ENCODE measurements at regions of chr12 and their contacts with region 1.

Region 1: GRCh38 chr12:19186722-19187661 is 57.5 kb downstream of the PLEKHA5 start:
- DNase-seq: peak; percentile 71
- ATAC-seq: peak; percentile 46; the same call in 1 of the 2 replicates
- H3K4me3 ChIP-seq: no peak overlapping the region
- H3K27ac ChIP-seq: no peak overlapping the region
- H3K4me1 ChIP-seq: peaks cover 10% of the 10 kb centered on the region
- H3K27me3 ChIP-seq: no peaks in the 10 kb centered on the region
- CTCF ChIP-seq: peak; percentile 68
- POLR2A ChIP-seq: no peak
- RAD21 ChIP-seq: peak; percentile 73

Region 2: GRCh38 chr12:18250313-18250916 is 936.6 kb before region 1 on chr12:
- CTCF ChIA-PET with region 1: interaction called, 5 read pairs
- POLR2A ChIA-PET with region 1: no interaction called
- dilution Hi-C with region 1: no loop called
- in situ Hi-C with region 1: loop called (anchors 10 kb)
- intact Hi-C with region 1: loop called (anchors 1 kb)
- DNase-seq: peak; percentile 76
- ATAC-seq: peak; percentile 48; the same call in 1 of the 2 replicates
- H3K4me3 ChIP-seq: no peak overlapping the region
- H3K27ac ChIP-seq: no peak overlapping the region
- H3K4me1 ChIP-seq: no peaks in the 10 kb centered on the region
- H3K27me3 ChIP-seq: no peaks in the 10 kb centered on the region
- CTCF ChIP-seq: peak; percentile 78
- POLR2A ChIP-seq: no peak
- RAD21 ChIP-seq: peak; percentile 78

Region 3: DNA sequence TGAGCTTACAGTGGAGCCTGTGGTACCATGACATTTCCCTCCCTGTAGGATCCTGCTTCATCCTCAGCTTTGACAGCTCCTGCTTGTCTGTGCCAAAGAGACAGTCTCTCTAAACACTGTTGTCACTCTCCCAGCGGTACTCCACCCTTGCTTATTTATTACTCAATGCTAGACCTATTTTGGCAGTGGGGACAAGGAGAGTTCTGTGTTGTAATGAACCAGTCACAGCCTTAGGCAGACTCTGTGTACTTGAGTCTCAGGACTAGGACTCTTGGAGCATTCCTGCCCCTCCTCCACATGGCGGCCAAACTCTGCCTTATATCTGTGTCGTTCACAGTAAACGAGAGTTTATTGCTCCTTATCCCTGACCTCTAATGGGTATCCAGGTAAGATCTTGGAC is 854.8 kb before region 1 on chr12:
- CTCF ChIA-PET with region 1: no interaction called
- POLR2A ChIA-PET with region 1: no interaction called
- dilution Hi-C with region 1: no loop called
- in situ Hi-C with region 1: no loop called
- intact Hi-C with region 1: no loop called
- DNase-seq: no peak
- ATAC-seq: no peak; the same call in 1 of the 2 replicates
- H3K4me3 ChIP-seq: no peak overlapping the region
- H3K27ac ChIP-seq: no peak overlapping the region
- H3K4me1 ChIP-seq: no peaks in the 10 kb centered on the region
- H3K27me3 ChIP-seq: no peaks in the 10 kb centered on the region
- CTCF ChIP-seq: no peak
- POLR2A ChIP-seq: no peak
- RAD21 ChIP-seq: no peak

Region 4: DNA sequence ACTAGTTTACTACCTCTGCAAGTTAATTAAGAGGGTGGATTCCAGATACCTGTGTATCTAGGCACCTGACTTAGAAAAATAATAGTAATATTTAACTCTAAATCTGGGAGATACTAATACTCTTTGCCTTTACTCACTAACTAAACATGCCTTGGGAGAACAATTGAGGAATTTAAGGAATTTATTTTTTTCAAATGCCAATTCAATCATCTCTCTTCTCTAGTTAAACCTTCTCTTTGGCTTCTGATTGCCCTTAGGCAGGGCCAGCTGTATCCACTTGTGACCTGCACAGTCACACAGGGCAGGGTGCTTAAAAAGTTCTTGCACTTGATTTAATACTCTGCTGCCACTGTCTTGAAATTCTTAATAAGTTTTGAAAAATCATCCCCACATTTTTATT is 591.6 kb before region 1 on chr12:
- CTCF ChIA-PET with region 1: no interaction called
- POLR2A ChIA-PET with region 1: no interaction called
- dilution Hi-C with region 1: no loop called
- in situ Hi-C with region 1: no loop called
- intact Hi-C with region 1: loop called (anchors 10 kb)
- DNase-seq: no peak
- ATAC-seq: peak; percentile 21; the same call in 1 of the 2 replicates
- H3K4me3 ChIP-seq: no peak overlapping the region
- H3K27ac ChIP-seq: no peak overlapping the region
- H3K4me1 ChIP-seq: peaks cover 1% of the 10 kb centered on the region; the same call in 1 of the 2 replicates
- H3K27me3 ChIP-seq: no peaks in the 10 kb centered on the region
- CTCF ChIP-seq: no peak
- POLR2A ChIP-seq: no peak
- RAD21 ChIP-seq: no peak

Region 5: GRCh38 chr12:18861287-18861858 is 325.6 kb before region 1 on chr12:
- CTCF ChIA-PET with region 1: no interaction called
- POLR2A ChIA-PET with region 1: no interaction called
- dilution Hi-C with region 1: no loop called
- in situ Hi-C with region 1: loop called (anchors 10 kb)
- intact Hi-C with region 1: loop called (anchors 2 kb)
- DNase-seq: peak; percentile 38
- ATAC-seq: no peak
- H3K4me3 ChIP-seq: no peak overlapping the region
- H3K27ac ChIP-seq: no peak overlapping the region
- H3K4me1 ChIP-seq: no peaks in the 10 kb centered on the region
- H3K27me3 ChIP-seq: no peaks in the 10 kb centered on the region
- CTCF ChIP-seq: peak; percentile 43
- POLR2A ChIP-seq: no peak
- RAD21 ChIP-seq: peak; percentile 46

Region 6: DNA sequence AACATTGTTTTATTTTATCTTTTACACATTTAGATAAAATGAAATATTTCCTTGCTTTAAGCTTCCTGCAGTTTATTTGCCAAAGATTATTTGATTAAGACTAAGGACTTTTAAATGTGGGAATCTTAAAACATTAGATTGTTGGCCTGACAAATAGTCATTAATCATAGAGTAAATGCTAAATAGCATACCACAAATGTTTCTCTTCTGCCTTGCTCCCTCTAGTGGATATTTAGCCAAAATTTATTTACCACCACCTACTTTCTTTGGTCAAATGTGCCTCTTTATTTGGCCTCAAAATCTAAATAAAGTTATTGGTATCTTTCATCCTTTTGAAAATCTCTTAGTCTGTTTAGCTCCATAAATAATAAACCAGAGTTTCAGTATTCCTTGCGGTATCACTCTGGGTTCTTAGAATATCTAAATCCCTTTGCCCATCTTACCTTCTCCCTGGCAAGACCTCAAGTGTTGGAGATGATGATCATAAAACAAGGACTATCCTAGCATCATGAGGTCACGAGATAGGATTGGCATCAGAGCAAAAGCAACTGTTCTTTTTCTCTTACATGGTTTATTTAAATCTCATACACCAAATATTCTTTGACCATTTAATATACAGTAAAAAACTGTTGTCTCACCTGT is 101.7 kb after region 1 on chr12:
- CTCF ChIA-PET with region 1: no interaction called
- POLR2A ChIA-PET with region 1: no interaction called
- dilution Hi-C with region 1: no loop called
- in situ Hi-C with region 1: no loop called
- intact Hi-C with region 1: loop called (anchors 5 kb)
- DNase-seq: peak; percentile 44
- ATAC-seq: 0 out of 2 replicates have a peak, but pooled peaks have one; percentile 46
- H3K4me3 ChIP-seq: no peak overlapping the region
- H3K27ac ChIP-seq: no peak overlapping the region
- H3K4me1 ChIP-seq: no peaks in the 10 kb centered on the region
- H3K27me3 ChIP-seq: no peaks in the 10 kb centered on the region
- CTCF ChIP-seq: peak; percentile 65
- POLR2A ChIP-seq: no peak
- RAD21 ChIP-seq: peak; percentile 69

Measured in IMR-90 (cell line).